H1 (cell line): ENCODE measurements at regions of chr19 and their contacts with region 1.

Region 1: GRCh38 chr19:21482863-21483276 is 22.5 kb upstream of the ZNF429 start:
- DNase-seq: peak; percentile 74 to 82
- H3K4me3 ChIP-seq: no peak overlapping the region
- H3K27ac ChIP-seq: no peak overlapping the region
- H3K4me1 ChIP-seq: no peaks in the 10 kb centered on the region
- H3K27me3 ChIP-seq: no peaks in the 10 kb centered on the region
- CTCF ChIP-seq: peak; percentile 80 to 85 (median 80)
- EP300 ChIP-seq: no peak
- POLR2A ChIP-seq: no peak
- RAD21 ChIP-seq: peak; percentile 86 to 91

Region 2: DNA sequence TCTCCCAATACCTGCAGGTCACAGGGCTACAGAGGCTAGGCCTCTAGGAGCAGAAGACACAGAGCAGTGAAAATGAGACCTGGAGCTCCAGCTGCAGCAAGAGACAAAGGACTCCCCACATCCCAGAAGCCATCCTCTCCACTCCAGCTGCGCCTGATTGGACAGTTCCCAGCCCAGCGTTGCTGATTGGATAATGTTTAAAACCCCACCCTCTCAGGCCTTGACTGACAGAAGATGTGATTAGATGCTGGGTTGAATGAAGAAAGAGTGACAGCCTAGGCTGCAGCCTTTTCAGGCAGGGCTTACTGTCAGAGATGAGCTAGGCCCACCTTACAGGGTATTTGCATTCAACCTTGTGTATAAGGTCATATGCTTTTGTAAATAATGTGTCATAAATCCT is 213.1 kb before region 1 on chr19:
- CTCF ChIA-PET with region 1: no interaction called
- POLR2A ChIA-PET with region 1: no interaction called
- DNase-seq: no peak
- H3K4me3 ChIP-seq: no peak overlapping the region
- H3K27ac ChIP-seq: no peak overlapping the region
- H3K4me1 ChIP-seq: no peaks in the 10 kb centered on the region
- H3K27me3 ChIP-seq: no peaks in the 10 kb centered on the region
- CTCF ChIP-seq: no peak
- EP300 ChIP-seq: no peak
- POLR2A ChIP-seq: no peak
- RAD21 ChIP-seq: no peak

Region 3: DNA sequence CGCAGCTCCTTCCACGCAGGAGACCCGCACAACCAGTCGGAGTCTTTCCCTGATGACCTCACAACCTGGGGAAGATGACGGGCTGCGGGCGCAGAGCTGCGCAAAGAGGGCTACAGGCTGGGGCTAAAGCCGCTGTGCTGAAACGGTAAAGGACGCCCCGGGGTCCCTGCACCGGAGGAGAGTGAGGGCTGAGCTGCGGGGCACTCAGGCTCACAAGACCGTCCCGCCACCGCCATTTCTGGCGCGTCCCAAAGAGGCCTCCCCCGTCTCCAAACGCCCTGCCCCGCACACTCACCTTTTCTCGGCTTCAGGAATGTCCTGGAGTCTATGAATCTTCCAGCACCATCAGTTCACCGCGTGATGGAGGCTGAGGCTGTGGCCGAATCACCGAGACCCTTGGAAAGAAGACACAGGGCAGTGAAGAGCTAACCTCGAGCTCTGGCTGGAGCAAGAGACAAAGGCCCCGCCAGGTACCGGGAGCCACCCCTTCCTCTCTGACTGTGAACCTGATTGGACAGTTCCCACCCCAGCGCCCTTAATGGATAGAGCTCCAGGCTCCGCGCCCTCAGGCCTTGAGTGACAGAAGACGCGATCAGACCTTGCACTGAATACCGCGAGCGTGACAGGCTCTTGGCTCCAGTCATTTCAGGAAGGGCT is 19.3 kb before region 1 on chr19:
- CTCF ChIA-PET with region 1: interaction called, 21 read pairs
- POLR2A ChIA-PET with region 1: interaction called, 16 read pairs
- DNase-seq: peak; percentile 75 to 81
- H3K4me3 ChIP-seq: peak overlapping the region; percentile 91 to 100 (median 96)
- H3K27ac ChIP-seq: peak overlapping the region; percentile 85
- H3K4me1 ChIP-seq: no peaks in the 10 kb centered on the region; a peak in 1 of 7 replicates
- H3K27me3 ChIP-seq: no peaks in the 10 kb centered on the region
- CTCF ChIP-seq: no peak
- EP300 ChIP-seq: no peak
- POLR2A ChIP-seq: peak; percentile 90 to 99
- RAD21 ChIP-seq: no peak

Region 4: DNA sequence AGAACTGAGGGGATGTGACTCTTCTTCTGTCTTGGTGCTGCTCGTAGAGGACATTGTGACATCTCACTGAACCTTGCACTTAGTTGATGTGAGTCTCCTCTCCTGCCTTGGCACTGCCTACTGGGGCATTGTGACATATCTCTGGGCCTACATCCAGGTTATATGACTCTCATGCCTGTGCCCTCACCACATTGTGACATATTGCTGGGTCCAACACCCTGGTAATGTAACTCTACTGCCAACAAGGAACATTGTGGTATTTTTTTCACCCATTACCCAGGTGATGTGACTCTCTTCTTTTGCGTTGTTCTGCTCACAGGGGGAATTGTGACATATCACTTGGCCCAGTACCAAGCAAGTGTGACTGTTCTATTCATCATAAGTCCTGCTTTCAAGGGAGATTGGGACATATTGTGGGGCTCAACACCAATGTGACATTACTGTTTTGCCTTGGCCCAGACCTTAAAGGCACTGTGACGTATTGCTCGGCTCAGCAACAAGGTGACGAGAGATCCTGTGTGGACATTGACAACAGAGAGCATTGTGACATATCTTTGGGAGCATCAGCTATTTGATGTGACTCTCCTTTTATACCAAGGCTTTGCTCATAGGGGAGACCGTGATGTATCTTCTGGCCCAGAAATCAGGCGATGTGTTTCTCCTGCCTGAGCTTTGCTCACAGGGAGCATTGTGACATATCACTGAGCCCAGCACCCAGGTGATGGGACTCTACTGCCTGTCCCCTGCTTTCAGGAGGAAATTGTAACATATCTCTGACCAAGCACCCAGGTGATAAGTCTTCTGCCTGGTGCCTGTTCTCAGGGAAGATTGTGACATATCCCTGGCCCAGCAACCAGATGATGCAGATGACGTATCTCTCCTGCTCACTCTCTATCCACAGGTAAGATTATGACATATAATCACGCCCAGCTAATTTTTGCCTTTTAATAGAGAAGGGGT is 10.4 kb after region 1 on chr19:
- CTCF ChIA-PET with region 1: interaction called, 22 read pairs
- POLR2A ChIA-PET with region 1: interaction called, 4 read pairs
- DNase-seq: no peak
- H3K4me3 ChIP-seq: no peak overlapping the region
- H3K27ac ChIP-seq: no peak overlapping the region
- H3K4me1 ChIP-seq: no peaks in the 10 kb centered on the region
- H3K27me3 ChIP-seq: no peaks in the 10 kb centered on the region
- CTCF ChIP-seq: no peak
- EP300 ChIP-seq: no peak
- POLR2A ChIP-seq: no peak
- RAD21 ChIP-seq: no peak

Region 5: GRCh38 chr19:21505459-21506451 is 22.9 kb after region 1 on chr19 and contains the start of gene ZNF429:
- CTCF ChIA-PET with region 1: interaction called, 23 read pairs
- POLR2A ChIA-PET with region 1: interaction called, 5 read pairs
- DNase-seq: peak; percentile 85 to 88
- H3K4me3 ChIP-seq: peak within 1 kb of the TSS; percentile 78 to 95 (median 92)
- H3K27ac ChIP-seq: peak within 1 kb of the TSS; percentile 84
- H3K4me1 ChIP-seq: no peaks in the 10 kb centered on the region
- H3K27me3 ChIP-seq: no peaks in the 10 kb centered on the region
- CTCF ChIP-seq: peak in 1 of 3 experiments; percentile 11; a peak in 2 of 4 replicates
- EP300 ChIP-seq: no peak
- POLR2A ChIP-seq: peak; percentile 63 to 83
- RAD21 ChIP-seq: peak in 1 of 2 experiments; percentile 20; a peak in 3 of 4 replicates
- total RNA-seq, gene ZNF429: 15.0 and 15.4 TPM in 2 replicates

Region 6: GRCh38 chr19:21691661-21692060 is 208.8 kb after region 1 on chr19:
- CTCF ChIA-PET with region 1: interaction called, 22 read pairs
- POLR2A ChIA-PET with region 1: no interaction called
- DNase-seq: no peak
- H3K4me3 ChIP-seq: no peak overlapping the region
- H3K27ac ChIP-seq: no peak overlapping the region
- H3K4me1 ChIP-seq: peaks cover 0 to 5% (median 3%) of the 10 kb centered on the region in 4 experiments; a peak in 2 of 7 replicates
- H3K27me3 ChIP-seq: no peaks in the 10 kb centered on the region
- CTCF ChIP-seq: no peak
- EP300 ChIP-seq: no peak
- POLR2A ChIP-seq: no peak
- RAD21 ChIP-seq: no peak